MCF 10A (cell line): ENCODE measurements at regions of chr6 and their contacts with region 1.

Region 1: GRCh38 chr6:26270903-26271667 is 93.9 kb upstream of the BTN3A2 start:
- DNase-seq: peak; percentile 97
- H3K4me3 Mint-ChIP-seq: no peak overlapping the region
- H3K27ac Mint-ChIP-seq: peak overlapping the region; percentile 54
- H3K4me1 Mint-ChIP-seq: peaks cover 6% of the 10 kb centered on the region
- H3K27me3 Mint-ChIP-seq: no peaks in the 10 kb centered on the region
- CTCF ChIP-seq: no peak

Region 2: DNA sequence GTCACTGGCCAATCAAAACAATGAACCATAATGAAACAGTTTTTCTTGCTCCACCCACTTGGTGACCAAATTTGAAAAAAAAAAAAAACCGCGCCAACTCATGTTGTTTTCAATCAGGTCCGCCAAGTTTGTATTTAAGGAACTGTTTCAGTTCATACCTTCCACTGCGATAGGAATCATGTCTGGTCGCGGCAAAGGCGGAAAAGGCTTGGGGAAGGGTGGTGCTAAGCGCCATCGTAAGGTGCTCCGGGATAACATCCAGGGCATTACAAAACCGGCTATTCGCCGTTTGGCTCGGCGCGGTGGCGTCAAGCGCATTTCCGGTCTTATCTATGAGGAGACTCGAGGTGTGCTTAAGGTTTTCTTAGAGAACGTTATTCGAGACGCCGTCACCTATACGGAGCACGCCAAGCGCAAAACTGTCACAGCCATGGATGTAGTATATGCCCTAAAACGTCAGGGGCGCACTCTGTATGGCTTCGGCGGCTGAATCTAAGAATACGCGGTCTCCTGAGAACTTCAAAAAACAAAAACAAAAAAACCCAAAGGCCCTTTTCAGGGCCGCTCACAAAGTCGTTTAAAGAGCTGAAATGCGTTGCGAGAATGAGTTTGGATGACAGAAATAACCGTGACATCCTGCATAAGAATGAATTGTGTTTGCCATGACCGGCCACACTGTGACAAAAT is 167.2 kb before region 1 on chr6:
- CTCF ChIA-PET with region 1: no interaction called
- POLR2A ChIA-PET with region 1: interaction called, 12 read pairs
- intact Hi-C with region 1: no loop called
- DNase-seq: peak; percentile 96
- H3K4me3 Mint-ChIP-seq: peak overlapping the region; percentile 75
- H3K27ac Mint-ChIP-seq: peak overlapping the region; percentile 92
- H3K4me1 Mint-ChIP-seq: peaks cover 11% of the 10 kb centered on the region
- H3K27me3 Mint-ChIP-seq: no peaks in the 10 kb centered on the region
- CTCF ChIP-seq: peak; percentile 41

Region 3: DNA sequence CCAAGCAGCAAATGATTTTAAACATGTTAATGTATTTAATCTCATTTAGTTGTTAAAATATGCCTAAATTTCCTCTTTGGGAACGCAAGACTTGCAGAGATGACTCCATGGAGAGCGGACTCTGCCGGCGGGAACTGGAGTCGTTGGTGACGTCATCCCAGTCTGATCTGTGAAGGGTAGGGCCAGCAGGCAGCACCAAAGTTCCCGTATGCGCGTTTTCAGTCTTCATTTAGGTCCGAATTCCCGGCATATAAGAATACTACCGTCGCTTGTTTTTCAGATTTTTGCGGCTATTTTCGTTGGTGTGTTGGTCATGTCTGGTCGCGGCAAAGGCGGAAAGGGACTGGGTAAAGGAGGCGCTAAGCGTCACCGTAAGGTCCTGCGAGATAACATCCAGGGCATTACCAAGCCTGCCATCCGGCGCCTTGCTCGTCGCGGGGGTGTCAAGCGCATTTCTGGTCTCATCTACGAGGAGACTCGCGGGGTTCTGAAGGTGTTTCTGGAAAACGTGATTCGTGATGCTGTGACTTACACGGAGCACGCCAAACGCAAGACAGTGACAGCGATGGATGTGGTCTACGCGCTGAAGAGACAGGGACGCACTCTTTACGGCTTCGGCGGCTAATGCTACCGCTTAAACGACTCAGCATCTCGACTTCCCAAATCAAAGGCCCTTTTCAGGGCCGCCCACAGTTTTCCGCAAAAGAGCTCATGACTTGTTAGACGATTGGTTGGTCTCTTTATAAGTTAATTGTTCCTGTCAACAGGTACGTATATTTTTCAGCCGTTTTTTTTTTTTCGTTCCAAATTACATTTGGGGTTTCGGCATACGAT is 66.5 kb before region 1 on chr6:
- CTCF ChIA-PET with region 1: interaction called, 4 read pairs
- POLR2A ChIA-PET with region 1: interaction called, 245 read pairs
- intact Hi-C with region 1: loop called (anchors 1 kb)
- DNase-seq: peak; percentile 98
- H3K4me3 Mint-ChIP-seq: no peak overlapping the region
- H3K27ac Mint-ChIP-seq: no peak overlapping the region
- H3K4me1 Mint-ChIP-seq: peaks cover 3% of the 10 kb centered on the region
- H3K27me3 Mint-ChIP-seq: no peaks in the 10 kb centered on the region
- CTCF ChIP-seq: no peak

Region 4: GRCh38 chr6:26249957-26250697 is 21.0 kb before region 1 on chr6:
- CTCF ChIA-PET with region 1: interaction called, 15 read pairs
- POLR2A ChIA-PET with region 1: interaction called, 55 read pairs
- intact Hi-C with region 1: loop called (anchors 2 kb)
- DNase-seq: peak; percentile 87
- H3K4me3 Mint-ChIP-seq: peak overlapping the region; percentile 94
- H3K27ac Mint-ChIP-seq: peak overlapping the region; percentile 63
- H3K4me1 Mint-ChIP-seq: peaks cover 7% of the 10 kb centered on the region
- H3K27me3 Mint-ChIP-seq: no peaks in the 10 kb centered on the region
- CTCF ChIP-seq: peak; percentile 42

Region 5: DNA sequence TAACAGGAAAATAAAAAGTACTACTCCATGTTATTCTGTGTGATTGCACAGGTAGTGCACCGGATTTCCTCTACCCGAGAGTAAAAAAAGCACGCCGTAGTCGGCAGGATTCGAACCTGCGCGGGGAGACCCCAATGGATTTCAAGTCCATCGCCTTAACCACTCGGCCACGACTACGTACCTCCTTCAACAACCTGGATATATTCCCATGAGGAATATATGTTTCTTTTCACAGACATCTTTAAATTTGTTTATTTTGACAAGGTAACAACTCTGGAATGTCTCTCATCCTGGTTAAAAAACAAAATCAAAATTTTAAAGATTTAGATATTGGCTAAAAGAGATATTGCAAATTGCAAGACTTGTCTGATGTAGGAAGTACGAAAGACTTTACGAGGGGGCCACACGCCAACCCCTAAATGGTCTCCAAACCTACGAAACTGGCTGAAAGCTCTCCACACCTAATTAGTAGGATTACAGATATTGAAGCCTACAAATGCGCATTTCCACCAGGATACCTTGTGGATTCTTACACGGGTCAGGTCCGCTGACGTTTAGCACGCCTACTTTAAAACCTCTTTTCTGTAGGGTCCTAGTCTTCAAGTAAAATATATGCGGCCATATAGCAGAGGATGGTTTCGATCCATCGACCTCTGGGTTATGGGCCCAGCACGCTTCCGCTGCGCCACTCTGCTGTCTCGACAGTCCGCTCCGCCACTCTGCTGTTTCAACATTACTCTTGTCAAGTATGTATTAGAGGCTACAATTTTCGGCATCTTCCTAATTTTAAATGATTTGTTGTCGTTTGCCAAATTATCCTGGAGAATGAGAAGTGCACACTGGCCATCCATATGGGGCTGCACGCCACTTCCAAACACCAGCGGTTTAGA is 41.7 kb after region 1 on chr6:
- CTCF ChIA-PET with region 1: no interaction called
- POLR2A ChIA-PET with region 1: interaction called, 12 read pairs
- intact Hi-C with region 1: loop called (anchors 2 kb)
- DNase-seq: peak; percentile 82
- H3K4me3 Mint-ChIP-seq: peak overlapping the region; percentile 79
- H3K27ac Mint-ChIP-seq: peak overlapping the region; percentile 74
- H3K4me1 Mint-ChIP-seq: peaks cover 26% of the 10 kb centered on the region
- H3K27me3 Mint-ChIP-seq: no peaks in the 10 kb centered on the region
- CTCF ChIP-seq: no peak

Region 6: GRCh38 chr6:26401987-26402658 is 131.0 kb after region 1 on chr6 and contains the start of gene BTN3A1:
- CTCF ChIA-PET with region 1: no interaction called
- POLR2A ChIA-PET with region 1: no interaction called
- intact Hi-C with region 1: no loop called
- DNase-seq: peak; percentile 81
- H3K4me3 Mint-ChIP-seq: peak within 1 kb of the TSS; percentile 86
- H3K27ac Mint-ChIP-seq: peak within 1 kb of the TSS; percentile 86
- H3K4me1 Mint-ChIP-seq: peaks cover 11% of the 10 kb centered on the region
- H3K27me3 Mint-ChIP-seq: no peaks in the 10 kb centered on the region
- CTCF ChIP-seq: no peak
- total RNA-seq, gene BTN3A1: 8.0 and 15.5 TPM in 2 replicates

Region 7: GRCh38 chr6:27825025-27825793 is 1554.1 kb after region 1 on chr6:
- CTCF ChIA-PET with region 1: no interaction called
- POLR2A ChIA-PET with region 1: interaction called, 16 read pairs
- intact Hi-C with region 1: no loop called
- DNase-seq: no peak
- H3K4me3 Mint-ChIP-seq: peak overlapping the region; percentile 94
- H3K27ac Mint-ChIP-seq: peak overlapping the region; percentile 95
- H3K4me1 Mint-ChIP-seq: peaks cover 10% of the 10 kb centered on the region
- H3K27me3 Mint-ChIP-seq: no peaks in the 10 kb centered on the region
- CTCF ChIP-seq: no peak